Cardiac septum (tissue), 1 donor: ENCODE measurements at regions of chr10 and their contacts with region 1.

Region 1: DNA sequence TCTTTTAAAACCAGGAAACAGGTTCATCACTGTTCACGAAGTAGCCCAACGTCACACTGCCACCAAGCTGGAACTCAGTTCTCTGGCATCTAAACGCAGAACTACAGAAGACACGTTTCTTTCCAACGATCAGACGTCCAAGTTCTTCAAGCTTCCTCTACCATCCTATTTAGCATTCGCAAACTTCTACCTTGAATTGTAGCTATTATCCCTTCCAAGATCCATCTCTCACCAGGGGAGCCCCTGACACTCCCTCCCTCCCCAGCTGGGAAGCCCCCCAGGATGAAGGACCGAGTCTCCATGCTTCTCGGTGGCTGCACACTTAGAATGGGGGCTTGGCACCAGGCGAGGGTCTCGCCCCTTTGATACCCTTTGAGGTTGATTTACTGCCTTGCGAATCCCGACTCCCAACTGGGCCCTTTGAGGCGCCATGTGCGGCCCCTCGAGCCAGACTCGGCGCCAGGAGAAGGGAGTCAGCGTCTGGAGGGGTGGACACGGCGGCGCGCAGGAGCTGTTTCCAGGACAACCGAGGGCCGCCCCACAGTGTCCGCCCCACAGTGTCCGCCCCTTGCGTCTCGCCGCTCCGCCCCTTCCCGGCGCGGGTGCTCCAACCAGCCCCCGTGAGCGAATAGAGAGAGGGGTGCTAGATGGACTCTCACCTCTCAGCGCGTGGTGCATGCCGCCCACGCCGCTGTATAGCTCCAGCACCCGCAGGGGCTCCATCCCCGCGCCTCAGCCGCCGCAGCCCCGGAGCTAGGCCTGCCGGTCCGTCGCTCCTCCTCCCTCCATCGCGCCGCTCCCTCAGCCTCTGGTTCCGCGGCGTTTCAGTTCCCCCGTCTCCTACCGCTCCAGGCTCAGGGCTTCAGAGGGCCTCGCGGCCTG is at the start of gene TRDMT1:
- DNase-seq: peak; percentile 93
- total RNA-seq, gene TRDMT1: 4.2 TPM

Region 2: DNA sequence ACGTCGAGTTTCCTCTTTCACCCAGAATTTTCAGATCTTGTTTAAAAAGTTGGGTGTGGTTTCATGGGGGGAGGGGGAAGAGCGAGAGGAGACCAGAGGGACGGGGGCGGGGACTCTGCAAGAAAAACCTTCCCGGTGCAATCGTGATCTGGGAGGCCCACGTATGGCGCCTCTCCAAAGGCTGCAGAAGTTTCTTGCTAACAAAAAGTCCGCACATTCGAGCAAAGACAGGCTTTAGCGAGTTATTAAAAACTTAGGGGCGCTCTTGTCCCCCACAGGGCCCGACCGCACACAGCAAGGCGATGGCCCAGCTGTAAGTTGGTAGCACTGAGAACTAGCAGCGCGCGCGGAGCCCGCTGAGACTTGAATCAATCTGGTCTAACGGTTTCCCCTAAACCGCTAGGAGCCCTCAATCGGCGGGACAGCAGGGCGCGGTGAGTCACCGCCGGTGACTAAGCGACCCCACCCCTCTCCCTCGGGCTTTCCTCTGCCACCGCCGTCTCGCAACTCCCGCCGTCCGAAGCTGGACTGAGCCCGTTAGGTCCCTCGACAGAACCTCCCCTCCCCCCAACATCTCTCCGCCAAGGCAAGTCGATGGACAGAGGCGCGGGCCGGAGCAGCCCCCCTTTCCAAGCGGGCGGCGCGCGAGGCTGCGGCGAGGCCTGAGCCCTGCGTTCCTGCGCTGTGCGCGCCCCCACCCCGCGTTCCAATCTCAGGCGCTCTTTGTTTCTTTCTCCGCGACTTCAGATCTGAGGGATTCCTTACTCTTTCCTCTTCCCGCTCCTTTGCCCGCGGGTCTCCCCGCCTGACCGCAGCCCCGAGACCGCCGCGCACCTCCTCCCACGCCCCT is 27.2 kb after region 1 on chr10 and contains the start of gene VIM:
- intact Hi-C with region 1: loop called (anchors 1 kb)
- DNase-seq: peak; percentile 95
- total RNA-seq, gene VIM: 368 TPM

Region 3: GRCh38 chr10:17335065-17335464 is 133.9 kb after region 1 on chr10:
- intact Hi-C with region 1: no loop called
- DNase-seq: no peak

Region 4: GRCh38 chr10:18659120-18659818 is 1458.1 kb after region 1 on chr10 and contains the start of gene ARL5B:
- intact Hi-C with region 1: loop called (anchors 10 kb)
- DNase-seq: peak; percentile 99
- total RNA-seq, gene ARL5B: 7.1 TPM